H1 (cell line): ENCODE measurements at regions of chr9 and their contacts with region 1.

Region 1: GRCh38 chr9:128818099-128818838 is at the start of gene ENDOG:
- DNase-seq: peak; percentile 96 to 100
- H3K4me3 ChIP-seq: peak within 1 kb of the TSS; percentile 40 to 70 (median 53)
- H3K27ac ChIP-seq: no peak within 1 kb of the TSS; the same call in 1 of the 2 replicates
- H3K4me1 ChIP-seq: peaks cover 0 to 11% (median 3%) of the 10 kb centered on the region in 4 experiments; a peak in 2 of 7 replicates
- H3K27me3 ChIP-seq: no peaks in the 10 kb centered on the region
- CTCF ChIP-seq: peak in 2 of 3 experiments; percentile 28 to 79; a peak in 2 of 4 replicates
- EP300 ChIP-seq: no peak; a peak in 1 of 3 replicates
- POLR2A ChIP-seq: peak in 1 of 2 experiments; percentile 88; a peak in 2 of 3 replicates
- RAD21 ChIP-seq: peak in 1 of 2 experiments; percentile 10; a peak in 2 of 4 replicates
- total RNA-seq, gene ENDOG: 17.5 and 22.4 TPM in 2 replicates

Region 2: DNA sequence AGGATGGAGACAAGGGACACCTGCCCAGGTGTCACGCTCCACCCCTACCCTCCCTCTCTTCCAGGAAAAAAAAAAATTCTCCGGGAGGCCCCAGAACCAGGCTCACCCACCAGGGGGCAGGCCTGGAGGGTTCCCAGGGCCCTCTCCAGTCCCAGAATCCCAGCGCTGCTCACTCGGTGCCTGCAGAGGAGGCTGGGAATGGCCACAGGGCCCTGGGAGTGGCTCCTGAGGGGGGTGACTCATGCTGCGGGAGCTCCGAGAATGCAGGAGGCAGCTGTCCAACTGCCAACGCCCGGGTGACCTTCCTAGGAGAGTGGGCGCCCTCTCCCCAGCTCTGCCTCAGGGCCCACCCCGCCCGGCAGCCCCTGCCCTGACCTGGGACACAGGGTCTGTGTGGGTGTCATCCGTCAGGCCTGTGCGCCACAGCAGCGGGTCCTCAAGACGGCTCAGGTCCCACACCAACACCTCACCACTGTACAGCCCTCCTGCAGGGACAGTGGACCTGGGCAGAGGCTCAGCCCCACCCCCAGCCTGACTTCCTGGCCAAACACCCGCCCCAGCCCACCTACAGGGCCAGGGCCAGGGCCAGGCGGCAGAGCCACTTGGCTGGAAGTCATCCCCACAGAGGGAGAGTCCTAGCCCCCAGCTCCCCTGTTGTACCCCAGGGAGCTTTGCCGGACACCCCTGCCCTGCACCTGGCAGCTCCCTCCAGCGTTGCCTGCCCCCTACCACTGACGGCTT is 182.8 kb before region 1 on chr9:
- CTCF ChIA-PET with region 1: no interaction called
- POLR2A ChIA-PET with region 1: interaction called, 11 read pairs
- DNase-seq: peak; percentile 81 to 90
- H3K4me3 ChIP-seq: no peak overlapping the region
- H3K27ac ChIP-seq: peak overlapping the region; percentile 34; the same call in 1 of the 2 replicates
- H3K4me1 ChIP-seq: peaks cover 0 to 14% (median 11%) of the 10 kb centered on the region in 4 experiments; a peak in 5 of 7 replicates
- H3K27me3 ChIP-seq: no peaks in the 10 kb centered on the region
- CTCF ChIP-seq: peak in 2 of 3 experiments; percentile 59 to 68; a peak in 3 of 4 replicates
- EP300 ChIP-seq: no peak
- POLR2A ChIP-seq: no peak
- RAD21 ChIP-seq: peak; percentile 60 to 71

Region 3: DNA sequence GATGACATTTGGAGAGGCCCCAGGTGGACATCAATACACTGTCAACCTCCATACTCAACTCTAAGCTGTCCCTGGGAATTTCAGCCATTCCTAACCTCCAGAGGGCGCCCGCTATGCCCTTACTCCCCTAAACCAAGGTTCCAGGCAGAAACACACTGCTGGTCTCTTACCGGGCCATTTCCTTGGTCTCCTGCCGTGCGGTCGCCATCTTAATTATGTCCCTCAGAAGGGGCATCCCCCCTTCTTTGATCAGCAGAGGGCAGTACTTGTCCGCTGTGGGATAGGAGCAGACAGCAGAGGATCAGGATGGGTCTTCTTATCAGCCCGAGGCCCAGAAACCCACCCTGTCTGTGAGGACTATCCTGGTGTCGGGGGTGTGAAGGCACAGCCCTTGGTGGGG is 85.0 kb before region 1 on chr9:
- CTCF ChIA-PET with region 1: interaction called, 7 read pairs
- POLR2A ChIA-PET with region 1: interaction called, 15 read pairs
- DNase-seq: peak; percentile 91 to 94
- H3K4me3 ChIP-seq: no peak overlapping the region
- H3K27ac ChIP-seq: no peak overlapping the region
- H3K4me1 ChIP-seq: peaks cover 0 to 1% (median 0%) of the 10 kb centered on the region in 4 experiments; a peak in 1 of 7 replicates
- H3K27me3 ChIP-seq: no peaks in the 10 kb centered on the region
- CTCF ChIP-seq: peak; percentile 55 to 98 (median 92)
- EP300 ChIP-seq: no peak
- POLR2A ChIP-seq: no peak
- RAD21 ChIP-seq: peak; percentile 86 to 88

Region 4: DNA sequence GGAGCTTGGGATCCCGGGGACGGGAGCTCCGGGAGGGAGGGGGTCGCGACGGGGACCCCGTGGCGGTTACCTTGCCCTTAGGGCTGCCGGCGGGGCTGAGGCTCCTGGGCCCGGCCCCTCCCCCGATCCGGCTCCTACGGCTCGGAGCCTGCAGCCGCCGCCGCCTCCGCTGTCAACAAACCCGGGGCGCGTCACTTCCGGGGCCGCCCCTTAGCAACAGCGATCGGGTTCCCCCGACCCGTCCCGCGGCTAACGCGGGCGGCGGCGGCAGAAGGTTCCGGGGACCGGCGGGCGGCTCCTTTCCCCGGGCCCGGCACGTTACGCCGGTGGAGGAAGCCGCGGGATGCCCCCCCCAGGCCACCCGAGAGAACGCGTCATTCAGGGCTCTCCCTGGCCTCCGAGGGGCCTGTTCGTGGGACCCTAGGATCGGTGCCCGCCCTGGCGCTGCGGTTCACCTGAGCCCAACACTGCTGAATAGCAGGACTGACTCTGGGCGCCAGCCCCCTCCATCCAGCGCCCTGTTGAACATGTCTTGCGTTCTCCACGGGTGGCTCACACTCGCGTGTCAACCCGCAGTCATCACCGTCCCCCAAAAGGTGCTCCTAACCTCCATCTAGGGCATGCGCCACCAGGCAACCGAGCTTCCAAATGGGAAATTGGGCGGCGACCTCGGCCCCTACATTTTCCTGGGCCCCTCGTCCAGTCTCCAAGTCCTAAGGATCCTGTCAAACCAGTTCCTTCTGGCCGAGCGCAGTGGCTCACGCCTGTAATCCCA is 46.3 kb before region 1 on chr9 and contains the start of gene ZER1:
- CTCF ChIA-PET with region 1: interaction called, 4 read pairs
- POLR2A ChIA-PET with region 1: interaction called, 20 read pairs
- DNase-seq: peak; percentile 53 to 97
- H3K4me3 ChIP-seq: peak within 1 kb of the TSS; percentile 75 to 97 (median 90)
- H3K27ac ChIP-seq: peak within 1 kb of the TSS; percentile 85
- H3K4me1 ChIP-seq: peaks cover 0 to 3% (median 1%) of the 10 kb centered on the region in 4 experiments; a peak in 3 of 7 replicates
- H3K27me3 ChIP-seq: no peaks in the 10 kb centered on the region
- CTCF ChIP-seq: no peak
- EP300 ChIP-seq: peak in 1 of 2 experiments; percentile 87; a peak in 1 of 3 replicates
- POLR2A ChIP-seq: peak in 1 of 2 experiments; percentile 79; a peak in 2 of 3 replicates
- RAD21 ChIP-seq: peak in 1 of 2 experiments; percentile 7; a peak in 1 of 4 replicates
- total RNA-seq, gene ZER1: 20.5 and 22.6 TPM in 2 replicates

Region 5: GRCh38 chr9:128786681-128787601 is 31.3 kb before region 1 on chr9 and contains the start of gene TBC1D13:
- CTCF ChIA-PET with region 1: interaction called, 10 read pairs
- POLR2A ChIA-PET with region 1: interaction called, 21 read pairs
- DNase-seq: peak; percentile 43 to 96
- H3K4me3 ChIP-seq: peak within 1 kb of the TSS; percentile 84 to 98 (median 88)
- H3K27ac ChIP-seq: peak within 1 kb of the TSS; percentile 51; the same call in 1 of the 2 replicates
- H3K4me1 ChIP-seq: peaks cover 0 to 2% (median 0%) of the 10 kb centered on the region in 4 experiments; a peak in 1 of 7 replicates
- H3K27me3 ChIP-seq: no peaks in the 10 kb centered on the region
- CTCF ChIP-seq: no peak
- EP300 ChIP-seq: peak in 1 of 2 experiments; percentile 97; a peak in 2 of 3 replicates
- POLR2A ChIP-seq: peak in 1 of 2 experiments; percentile 56; a peak in 2 of 3 replicates
- RAD21 ChIP-seq: peak in 1 of 2 experiments; percentile 17; a peak in 1 of 4 replicates
- total RNA-seq, gene TBC1D13: 21.3 and 26.3 TPM in 2 replicates

Region 6: GRCh38 chr9:128792978-128793686 is 25.1 kb before region 1 on chr9:
- CTCF ChIA-PET with region 1: interaction called, 10 read pairs
- POLR2A ChIA-PET with region 1: interaction called, 21 read pairs
- DNase-seq: no peak
- H3K4me3 ChIP-seq: no peak overlapping the region
- H3K27ac ChIP-seq: no peak overlapping the region
- H3K4me1 ChIP-seq: peaks cover 0 to under 1% (median 0%) of the 10 kb centered on the region in 4 experiments; a peak in 1 of 7 replicates
- H3K27me3 ChIP-seq: no peaks in the 10 kb centered on the region
- CTCF ChIP-seq: no peak
- EP300 ChIP-seq: no peak
- POLR2A ChIP-seq: no peak
- RAD21 ChIP-seq: no peak

Region 7: DNA sequence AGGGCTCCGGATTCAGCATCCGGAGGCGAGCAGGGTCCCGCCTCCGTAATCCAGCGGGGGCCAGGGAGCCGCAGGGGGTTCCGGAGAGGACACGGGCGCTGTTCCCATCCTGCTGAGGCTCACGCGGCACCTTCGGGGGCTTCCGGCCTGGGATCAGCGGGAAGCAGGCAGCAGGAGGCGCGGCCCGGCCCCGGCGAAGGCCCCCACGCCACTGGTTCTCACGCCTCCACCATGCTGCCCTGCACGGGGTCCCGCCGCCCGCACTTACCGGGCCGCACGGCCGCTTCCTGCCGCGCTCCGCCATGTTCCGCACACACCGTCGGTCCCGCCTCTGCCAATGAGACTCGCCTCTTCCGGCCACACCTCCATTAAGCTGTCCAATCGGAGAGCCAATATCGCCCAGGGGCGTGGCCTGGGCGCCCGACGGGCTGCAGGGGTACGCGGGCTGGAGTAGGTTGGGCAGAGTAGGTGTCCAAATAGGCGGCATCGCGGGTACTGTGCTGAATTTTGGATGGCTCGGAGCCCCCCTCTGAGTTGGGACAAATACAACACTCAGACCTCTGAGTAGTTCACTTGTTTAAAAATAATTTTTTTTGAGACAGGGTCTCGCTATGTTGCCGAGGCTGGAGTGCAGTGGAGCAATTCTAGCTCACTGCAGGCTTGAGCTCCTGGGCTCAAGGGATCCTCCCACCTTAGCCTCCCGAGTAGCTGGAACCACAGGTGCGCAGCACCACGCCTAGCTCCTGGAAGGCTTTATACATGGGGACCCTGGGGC is 11.4 kb after region 1 on chr9 and contains the start of gene SPOUT1:
- CTCF ChIA-PET with region 1: interaction called, 12 read pairs
- POLR2A ChIA-PET with region 1: interaction called, 62 read pairs
- DNase-seq: peak; percentile 73 to 96
- H3K4me3 ChIP-seq: peak within 1 kb of the TSS; percentile 85 to 95 (median 92)
- H3K27ac ChIP-seq: peak within 1 kb of the TSS; percentile 70
- H3K4me1 ChIP-seq: peaks cover 0 to 3% (median 0%) of the 10 kb centered on the region in 4 experiments; a peak in 1 of 7 replicates
- H3K27me3 ChIP-seq: no peaks in the 10 kb centered on the region
- CTCF ChIP-seq: no peak
- EP300 ChIP-seq: no peak
- POLR2A ChIP-seq: peak in 1 of 2 experiments; percentile 89; a peak in 2 of 3 replicates
- RAD21 ChIP-seq: no peak
- total RNA-seq, gene SPOUT1: 73.4 and 77.8 TPM in 2 replicates